HEK293T (cell line): ENCODE measurements at regions of chr14 and their contacts with region 1.

Region 1: DNA sequence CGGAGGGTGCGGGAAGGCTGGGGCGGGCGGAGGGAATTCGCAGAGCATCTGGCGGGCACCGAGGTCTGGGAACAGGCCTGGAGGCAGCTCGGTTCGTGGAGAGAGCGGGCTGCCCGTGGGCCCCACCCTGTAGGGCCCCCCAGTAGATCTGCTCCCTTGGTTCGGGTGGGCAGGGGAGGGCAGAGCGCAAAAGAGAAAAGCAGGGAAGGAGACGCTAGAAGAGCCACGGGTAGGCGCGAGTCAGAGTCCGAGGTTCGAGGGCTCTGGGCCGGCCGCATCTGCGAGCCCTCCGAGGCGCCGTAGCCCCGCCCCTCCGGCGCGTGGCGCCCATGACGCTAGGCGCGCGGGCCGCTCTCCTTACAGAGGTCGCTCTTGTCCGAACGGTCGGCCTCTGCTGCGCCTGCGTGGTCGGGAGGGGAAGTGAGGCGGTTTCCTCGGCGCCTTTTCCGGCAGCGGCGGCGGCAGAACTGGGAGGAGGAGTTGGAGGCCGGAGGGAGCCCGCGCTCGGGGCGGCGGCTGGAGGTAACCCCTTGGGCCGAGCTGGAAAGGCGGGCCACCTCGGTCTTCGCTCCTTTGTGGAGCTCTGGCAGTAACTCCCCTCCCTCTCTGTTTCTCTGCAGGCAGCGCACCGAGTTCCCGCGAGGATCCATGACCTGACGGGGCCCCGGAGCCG is at the start of gene ARF6:
- DNase-seq: peak; percentile 94

Region 2: DNA sequence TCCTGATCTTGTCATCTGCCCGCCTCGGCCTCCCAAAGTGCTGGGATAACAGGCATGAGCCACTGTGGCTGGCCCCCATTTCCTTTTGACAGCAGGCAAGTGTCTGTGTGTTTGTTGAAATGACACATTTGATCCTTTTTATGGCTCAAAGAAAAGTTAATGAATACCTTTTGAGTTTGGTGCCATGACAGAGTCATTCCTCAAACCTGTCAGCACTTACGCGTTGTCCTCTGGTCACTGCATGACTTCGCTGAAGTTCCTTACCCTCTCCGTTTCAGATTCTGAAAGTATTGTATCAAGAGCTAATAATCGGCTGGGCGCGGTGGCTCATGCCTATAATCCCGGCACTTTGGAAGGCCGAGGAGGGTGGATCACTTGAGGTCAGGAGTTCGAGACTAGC is 72.6 kb before region 1 on chr14:
- CTCF ChIA-PET with region 1: no interaction called
- POLR2A ChIA-PET with region 1: no interaction called
- DNase-seq: no peak

Region 3: DNA sequence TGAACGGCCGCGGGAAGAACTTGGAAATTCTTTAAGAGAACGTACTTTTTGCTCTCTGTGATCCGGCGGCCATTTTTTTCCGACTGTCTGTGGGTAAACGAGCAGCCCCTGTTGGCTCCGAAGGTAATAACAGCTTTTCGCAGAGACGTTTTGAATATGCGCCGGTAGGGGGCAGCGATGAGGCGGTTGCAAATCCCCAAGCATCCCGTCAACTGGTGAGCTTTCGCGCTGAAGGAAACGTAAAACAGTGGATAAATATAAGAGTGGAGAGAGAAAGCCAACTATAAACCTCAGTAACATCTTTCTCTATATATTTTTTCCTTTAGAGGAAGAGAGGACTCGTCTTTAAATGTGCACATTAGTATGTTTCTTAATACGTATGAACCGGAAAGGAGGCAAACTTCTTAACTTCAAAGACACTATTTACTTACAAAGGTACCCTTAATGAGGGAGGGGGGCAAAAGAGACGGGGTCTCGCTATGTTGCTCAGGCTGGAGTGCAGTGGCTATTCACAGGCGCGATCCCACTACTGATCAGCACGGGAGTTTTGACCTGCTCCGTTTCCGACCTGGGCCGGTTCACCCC is 30.6 kb before region 1 on chr14:
- CTCF ChIA-PET with region 1: interaction called, 12 read pairs
- POLR2A ChIA-PET with region 1: interaction called, 18 read pairs
- DNase-seq: peak; percentile 56

Region 4: DNA sequence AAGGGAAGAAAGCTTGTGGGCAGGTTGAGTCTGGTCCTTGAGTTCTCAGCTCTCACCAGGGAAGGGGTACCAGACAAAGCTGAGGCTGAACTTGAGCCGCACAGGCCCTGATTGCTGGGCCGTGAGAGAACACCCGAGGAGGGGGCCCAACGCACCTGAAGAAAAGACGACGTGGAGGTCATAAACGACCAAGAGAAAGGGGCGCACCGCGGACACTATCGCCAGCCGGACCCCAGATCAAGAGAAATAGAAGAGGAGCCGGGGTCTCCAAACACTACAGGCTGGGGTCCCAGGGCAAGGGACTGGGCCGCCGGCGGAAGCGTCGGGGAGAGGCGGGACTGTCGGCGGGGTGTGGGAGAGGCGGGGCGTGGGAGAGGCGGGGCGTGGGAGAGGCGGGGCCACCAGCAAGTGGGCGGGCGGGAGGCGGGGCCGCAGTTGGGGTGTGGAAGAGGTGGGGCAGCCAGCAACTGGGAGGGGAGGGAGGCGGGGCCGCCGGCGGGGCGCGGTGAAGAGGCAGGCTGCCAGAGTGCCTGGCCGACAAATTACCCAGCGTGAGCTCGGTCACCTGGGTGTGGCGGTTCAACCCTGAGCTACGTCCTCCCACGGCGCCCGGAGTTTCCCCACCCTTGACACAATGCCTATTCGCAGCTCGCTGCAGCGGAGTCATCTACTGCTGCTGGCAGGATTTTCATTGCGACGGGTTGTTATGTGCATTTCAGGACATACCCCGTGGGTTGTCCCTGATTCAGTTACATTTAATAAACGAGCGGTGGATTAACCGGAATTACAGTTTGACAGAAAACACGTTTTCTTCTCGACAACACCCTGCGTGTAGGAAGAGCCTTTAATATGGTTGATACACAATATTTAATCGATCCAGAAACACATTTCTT is 24.7 kb before region 1 on chr14:
- CTCF ChIA-PET with region 1: interaction called, 5 read pairs
- POLR2A ChIA-PET with region 1: interaction called, 18 read pairs
- DNase-seq: peak; percentile 94

Region 5: GRCh38 chr14:49879683-49880204 is 13.0 kb before region 1 on chr14:
- CTCF ChIA-PET with region 1: interaction called, 9 read pairs
- POLR2A ChIA-PET with region 1: interaction called, 25 read pairs
- DNase-seq: peak; percentile 74

Region 6: DNA sequence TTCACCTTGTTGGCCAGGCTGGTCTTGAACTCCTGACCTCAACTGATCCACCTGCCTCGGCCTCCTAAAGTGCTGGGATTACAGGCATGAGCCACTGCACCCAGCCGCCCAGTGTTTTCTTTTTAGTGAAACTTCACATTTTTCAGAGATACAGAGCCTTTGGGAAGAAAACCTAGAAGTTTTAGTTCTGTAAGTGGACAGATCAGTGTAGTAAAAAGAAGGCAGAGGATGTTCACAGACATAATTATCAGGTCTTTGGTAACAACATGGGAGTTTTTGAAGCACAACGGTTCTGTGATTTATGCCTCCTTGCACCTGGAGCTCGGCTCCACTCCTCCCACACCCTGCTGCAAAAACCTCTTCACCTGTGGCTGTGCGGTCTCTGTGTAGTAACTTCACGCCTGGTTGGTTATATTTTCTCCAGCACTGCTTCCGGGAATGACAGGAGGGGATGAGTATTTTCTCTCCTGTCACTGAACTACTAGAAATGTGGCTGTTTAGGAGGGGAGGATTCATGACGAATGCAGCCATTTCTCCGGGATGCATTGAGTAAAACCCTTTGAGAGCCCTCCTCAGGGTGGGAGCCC is 67.1 kb after region 1 on chr14:
- CTCF ChIA-PET with region 1: no interaction called
- POLR2A ChIA-PET with region 1: no interaction called
- DNase-seq: no peak

Region 7: DNA sequence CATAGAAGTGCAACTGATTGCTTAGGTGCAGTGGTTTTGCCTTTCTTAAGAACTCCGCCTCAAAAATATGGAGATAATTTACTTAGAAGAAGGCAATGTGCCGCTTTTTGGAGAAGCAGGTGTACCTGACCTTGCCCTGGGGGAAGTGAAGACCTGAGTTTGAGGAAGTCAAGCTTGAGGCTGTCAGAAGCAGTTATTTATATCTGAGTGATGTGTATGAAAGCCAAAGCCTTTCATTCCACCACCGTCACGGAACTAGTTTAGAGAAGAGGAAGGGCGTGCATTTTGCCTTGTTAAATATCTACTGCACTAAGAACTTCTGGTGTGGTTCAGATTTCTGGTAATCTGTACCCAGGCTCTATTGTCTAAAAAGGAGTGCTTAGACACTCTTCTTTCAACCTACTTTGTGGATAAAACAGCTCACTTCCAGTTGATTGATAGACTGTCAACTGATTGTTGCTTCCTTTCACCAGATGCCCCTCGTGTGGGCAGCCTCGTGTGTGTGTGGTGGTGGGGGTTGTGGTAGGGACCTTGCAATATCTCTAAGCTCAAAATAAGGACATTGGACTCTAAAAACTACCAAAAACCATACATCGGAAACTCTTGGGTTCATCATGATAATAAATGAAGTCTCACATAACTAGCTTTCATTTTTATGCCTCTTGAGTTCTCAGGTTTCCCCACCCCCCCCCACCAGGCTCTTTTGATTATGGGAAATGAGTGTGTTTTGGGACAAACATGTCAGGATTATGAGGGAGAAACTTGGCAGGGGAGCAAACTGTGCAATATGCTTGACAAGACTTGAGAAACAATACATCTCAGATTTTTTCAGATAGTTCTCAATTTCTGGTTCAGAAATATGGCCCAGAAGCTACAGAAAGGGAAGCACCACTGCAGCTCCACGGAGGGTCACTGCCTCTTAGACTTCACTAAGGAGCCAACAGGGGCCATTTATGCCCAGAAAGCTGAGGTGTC is 78.7 kb after region 1 on chr14:
- CTCF ChIA-PET with region 1: no interaction called
- POLR2A ChIA-PET with region 1: interaction called, 14 read pairs
- DNase-seq: no peak

Region 8: DNA sequence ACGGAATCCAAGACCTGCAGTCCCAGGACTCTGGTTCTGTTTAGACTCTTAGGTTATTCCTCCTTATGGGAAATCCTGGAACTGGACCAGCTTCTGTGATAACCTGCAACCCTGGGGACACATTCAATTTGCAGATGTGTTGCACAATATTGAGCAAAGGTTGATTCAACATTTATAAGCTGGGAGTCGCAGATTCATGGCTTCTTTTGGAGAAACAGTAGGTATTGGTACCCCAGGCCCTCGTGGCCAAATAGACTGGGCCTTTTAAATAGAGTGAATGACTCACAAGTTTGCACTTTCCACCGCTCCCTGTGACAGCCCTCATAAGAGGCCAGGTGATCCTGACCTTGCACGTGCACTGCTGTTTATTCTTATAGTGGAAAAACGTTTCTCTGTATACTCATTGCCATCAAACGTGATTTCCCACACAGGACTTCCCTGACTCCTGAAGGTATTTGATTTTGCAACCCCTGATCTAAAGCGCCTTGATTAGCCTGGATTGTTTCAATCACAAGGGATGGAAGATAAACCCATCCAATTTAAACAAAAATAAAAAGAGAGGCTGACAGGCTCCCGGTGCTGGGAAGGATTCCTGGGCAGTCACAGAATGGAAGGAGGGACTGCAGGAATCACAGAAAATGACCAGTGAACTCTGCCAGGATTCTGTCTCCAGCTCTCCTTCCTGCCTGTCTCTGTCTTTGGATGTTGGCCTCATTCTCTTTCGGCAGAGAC is 125.6 kb after region 1 on chr14:
- CTCF ChIA-PET with region 1: no interaction called
- POLR2A ChIA-PET with region 1: no interaction called
- DNase-seq: no peak

Region 9: GRCh38 chr14:50225067-50225973 is 332.5 kb after region 1 on chr14:
- CTCF ChIA-PET with region 1: no interaction called
- POLR2A ChIA-PET with region 1: no interaction called
- DNase-seq: no peak